ENCODE measurements at regions of chr17 and their contacts with region 1.

Region 1: DNA sequence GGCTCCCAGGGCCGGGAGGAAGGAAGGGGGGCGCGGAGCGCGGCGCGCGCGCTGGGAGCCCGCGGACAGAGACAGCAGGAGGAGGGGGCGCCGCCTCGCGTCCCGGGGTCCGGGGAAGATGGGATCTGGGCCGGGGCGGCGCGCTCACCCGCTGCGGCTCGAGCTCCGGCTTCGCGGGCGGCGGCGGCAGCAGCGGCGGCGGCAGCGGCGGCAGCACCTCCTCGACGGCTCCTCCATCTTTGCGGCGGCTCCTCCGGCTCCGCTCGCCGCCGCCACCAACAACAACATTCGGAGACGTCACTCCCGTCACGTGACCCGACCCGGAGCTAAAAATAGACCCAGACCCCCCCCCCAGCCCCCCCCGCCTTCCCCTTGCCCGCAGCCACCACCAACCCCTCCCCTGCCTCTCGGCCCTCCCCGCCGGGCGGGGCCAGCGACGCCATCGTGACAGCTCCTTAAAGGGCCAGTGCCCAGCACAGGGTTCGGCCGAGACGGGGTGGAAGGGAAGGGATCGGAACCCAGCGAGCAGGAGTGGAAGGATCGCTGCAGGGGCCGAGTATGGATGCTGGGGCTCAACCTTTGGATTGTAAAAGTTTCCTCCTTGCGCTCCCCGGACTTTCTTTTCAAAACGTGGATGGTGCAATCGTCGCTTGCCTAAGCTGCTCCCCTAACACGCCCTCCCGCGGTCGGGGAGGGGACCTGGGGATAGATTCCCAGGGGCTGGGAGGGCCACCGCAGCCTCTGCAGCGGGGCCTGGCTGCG is at the start of gene HDAC5:
- DNase-seq: peak; percentile 96
- ATAC-seq: peak; percentile 97 to 99 (median 98)
- H3K4me3 ChIP-seq: peak within 1 kb of the TSS; percentile 67 to 100 (median 94)
- H3K27ac ChIP-seq: peak within 1 kb of the TSS; percentile 59 to 98 (median 94)
- H3K4me1 ChIP-seq: peaks cover 3 to 54% (median 48%) of the 10 kb centered on the region in 9 donors
- H3K27me3 ChIP-seq: no peaks in the 10 kb centered on the region
- CTCF ChIP-seq: peak; percentile 43 to 84 (median 66)
- total RNA-seq, gene HDAC5: 55.2 to 85.4 (median 68.3) TPM

Region 2: DNA sequence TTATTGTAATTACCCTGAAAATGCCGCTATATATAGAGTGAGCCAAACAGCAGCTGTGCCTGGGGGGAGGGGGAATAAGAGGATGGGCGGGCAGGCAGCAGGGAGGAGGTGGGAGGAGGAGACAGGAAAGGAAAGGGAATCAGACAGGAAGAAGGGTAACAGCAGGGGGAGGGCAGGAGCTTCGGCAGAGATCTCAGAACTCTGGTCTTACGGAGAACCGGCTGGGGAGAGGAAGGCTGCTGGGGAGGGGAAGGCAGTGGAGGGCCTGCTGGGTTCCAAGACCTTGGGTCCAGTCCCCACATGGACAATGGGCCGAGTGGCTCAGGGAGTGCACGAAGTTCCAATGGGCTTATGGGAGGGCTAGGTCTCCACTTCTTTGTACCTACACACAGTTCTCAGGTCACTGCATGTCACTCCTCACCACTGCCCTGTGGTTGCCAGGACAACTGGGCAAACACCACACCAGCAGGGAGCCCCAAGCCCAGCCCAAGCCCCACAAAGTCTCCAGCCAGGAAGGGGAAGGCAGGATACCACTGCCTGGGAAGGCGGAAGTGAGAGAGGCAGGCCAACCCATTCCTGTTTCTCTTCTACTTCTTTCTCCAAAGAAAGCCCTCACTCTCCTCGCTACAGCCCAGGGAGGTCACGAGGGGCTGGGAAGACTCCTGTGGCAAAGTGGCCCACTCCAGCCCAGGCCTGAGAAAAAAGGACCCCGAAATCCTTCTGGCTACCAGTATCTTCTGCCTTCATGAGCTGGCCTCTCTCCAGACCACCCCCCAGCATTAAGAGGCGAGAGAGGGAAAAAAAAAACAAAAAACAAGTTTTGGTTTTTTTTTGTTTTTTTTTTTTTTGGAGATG is 27.7 kb before region 1 on chr17:
- intact Hi-C with region 1: loop called in 1 of 10 experiments (anchors 1 kb)
- DNase-seq: peak; percentile 64 to 90
- ATAC-seq: peak; percentile 26 to 88 (median 82)
- H3K4me3 ChIP-seq: peak overlapping the region in 9 of 10 donors; percentile 10 to 50 (median 38)
- H3K27ac ChIP-seq: peak overlapping the region; percentile 83 to 97 (median 92)
- H3K4me1 ChIP-seq: peaks cover 20 to 78% (median 56%) of the 10 kb centered on the region in 9 donors
- H3K27me3 ChIP-seq: no peaks in the 10 kb centered on the region
- CTCF ChIP-seq: peak in 5 of 9 donors; percentile 15 to 57 (median 31)

Measured in heart right ventricle (tissue), 16 donors.